Naive thymus-derived CD4-positive, alpha-beta T cell (primary cell): ENCODE measurements at regions of chr18 and their contacts with region 1.

Region 1: DNA sequence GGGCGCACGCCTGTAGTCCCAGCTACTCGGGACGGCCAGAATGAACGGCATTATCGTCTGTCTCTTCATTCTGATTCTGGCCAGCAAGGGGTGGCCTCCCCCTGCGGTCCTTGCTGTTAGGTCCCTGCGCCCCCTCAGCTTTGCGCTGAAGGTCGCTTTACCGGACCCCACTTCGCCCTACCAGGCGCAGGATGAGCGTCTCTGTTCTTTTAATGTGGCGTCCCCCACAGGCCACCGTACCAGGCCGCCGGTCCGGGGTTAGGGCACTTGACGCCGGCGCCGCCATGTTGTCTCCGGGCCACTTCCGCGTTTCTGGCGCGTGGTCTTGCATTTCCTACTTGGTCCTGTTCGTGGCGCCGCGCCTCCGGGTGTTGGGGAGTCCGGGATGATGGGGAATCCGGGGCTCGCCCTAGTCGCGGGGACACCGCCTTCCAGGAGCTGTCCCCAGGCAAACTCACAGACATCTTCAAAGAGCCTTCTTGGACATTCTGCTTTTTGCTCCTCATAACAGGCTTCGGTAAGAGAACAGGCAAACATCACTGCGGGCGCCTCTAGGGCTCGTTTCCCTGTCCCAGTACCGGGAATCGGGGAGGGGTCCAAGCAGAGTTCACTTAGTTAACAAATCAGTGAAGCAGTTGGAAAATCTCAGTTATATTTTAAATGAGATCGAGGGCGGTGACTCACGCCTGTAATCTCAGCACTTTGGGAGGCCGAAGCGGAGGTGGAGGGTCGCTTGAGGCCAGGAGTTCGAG is 8.5 kb upstream of the NARS1 start:
- DNase-seq: peak; percentile 89 to 95 (median 93)
- ATAC-seq: peak; percentile 99
- H3K4me3 ChIP-seq: peak overlapping the region; percentile 88
- H3K4me3 Mint-ChIP-seq: peak overlapping the region; percentile 88 to 98 (median 96)
- H3K27ac ChIP-seq: peak overlapping the region; percentile 79
- H3K27ac Mint-ChIP-seq: peak overlapping the region; percentile 84 to 99 (median 97)
- H3K4me1 ChIP-seq: peaks cover 10 to 11% of the 10 kb centered on the region in 2 donors
- H3K4me1 Mint-ChIP-seq: peaks cover 9 to 23% (median 20%) of the 10 kb centered on the region in 7 donors
- H3K27me3 ChIP-seq: no peaks in the 10 kb centered on the region
- H3K27me3 Mint-ChIP-seq: no peaks in the 10 kb centered on the region

Region 2: GRCh38 chr18:57586251-57587049 is 43.7 kb before region 1 on chr18 and contains the start of gene FECH:
- CTCF ChIA-PET with region 1: no interaction called
- POLR2A ChIA-PET with region 1: interaction called, 3 read pairs
- intact Hi-C with region 1: loop called (anchors 1 kb)
- DNase-seq: peak; percentile 59 to 81 (median 73)
- ATAC-seq: peak; percentile 98
- H3K4me3 ChIP-seq: peak within 1 kb of the TSS; percentile 61
- H3K4me3 Mint-ChIP-seq: peak within 1 kb of the TSS; percentile 81 to 95 (median 89)
- H3K27ac ChIP-seq: peak within 1 kb of the TSS; percentile 75
- H3K27ac Mint-ChIP-seq: peak within 1 kb of the TSS; percentile 65 to 90 (median 83)
- H3K4me1 ChIP-seq: peaks cover 9 to 11% of the 10 kb centered on the region in 2 donors
- H3K4me1 Mint-ChIP-seq: peaks cover 10 to 35% (median 23%) of the 10 kb centered on the region in 7 donors
- H3K27me3 ChIP-seq: no peaks in the 10 kb centered on the region
- H3K27me3 Mint-ChIP-seq: no peaks in the 10 kb centered on the region
- total RNA-seq, gene FECH: 11.7 to 15.3 (median 13.5) TPM

Region 3: GRCh38 chr18:57833443-57834101 is 203.4 kb after region 1 on chr18:
- CTCF ChIA-PET with region 1: interaction called, 5 read pairs
- POLR2A ChIA-PET with region 1: no interaction called
- intact Hi-C with region 1: loop called in 1 of 2 experiments (anchors 1 kb)
- DNase-seq: peak in 2 of 9 donors; percentile 2 to 26
- ATAC-seq: peak; percentile 38
- H3K4me3 ChIP-seq: peak overlapping the region; percentile 38
- H3K4me3 Mint-ChIP-seq: peak overlapping the region; percentile 21 to 83 (median 74)
- H3K27ac ChIP-seq: no peak overlapping the region
- H3K27ac Mint-ChIP-seq: peak overlapping the region in 7 of 9 donors; percentile 19 to 92 (median 60)
- H3K4me1 ChIP-seq: peaks cover 0 to 6% of the 10 kb centered on the region in 2 donors
- H3K4me1 Mint-ChIP-seq: peaks cover 16 to 37% (median 26%) of the 10 kb centered on the region in 7 donors
- H3K27me3 ChIP-seq: no peaks in the 10 kb centered on the region
- H3K27me3 Mint-ChIP-seq: peaks cover 0 to 28% (median 4%) of the 10 kb centered on the region in 5 donors

Region 4: GRCh38 chr18:58117786-58118403 is 487.7 kb after region 1 on chr18:
- CTCF ChIA-PET with region 1: no interaction called
- POLR2A ChIA-PET with region 1: no interaction called
- intact Hi-C with region 1: loop called in 1 of 2 experiments (anchors 1 kb)
- DNase-seq: no peak
- ATAC-seq: peak; percentile 41
- H3K4me3 ChIP-seq: no peak overlapping the region
- H3K4me3 Mint-ChIP-seq: no peak overlapping the region
- H3K27ac ChIP-seq: no peak overlapping the region
- H3K27ac Mint-ChIP-seq: no peak overlapping the region
- H3K4me1 ChIP-seq: no peaks in the 10 kb centered on the region
- H3K4me1 Mint-ChIP-seq: peaks cover 0 to 9% (median 0%) of the 10 kb centered on the region in 7 donors
- H3K27me3 ChIP-seq: no peaks in the 10 kb centered on the region
- H3K27me3 Mint-ChIP-seq: peaks cover 0 to 14% (median 4%) of the 10 kb centered on the region in 5 donors

Region 5: GRCh38 chr18:58180738-58181353 is 550.7 kb after region 1 on chr18:
- CTCF ChIA-PET with region 1: no interaction called
- POLR2A ChIA-PET with region 1: no interaction called
- intact Hi-C with region 1: loop called in 1 of 2 experiments (anchors 1 kb)
- DNase-seq: peak; percentile 25 to 68 (median 50)
- ATAC-seq: peak; percentile 81
- H3K4me3 ChIP-seq: no peak overlapping the region
- H3K4me3 Mint-ChIP-seq: no peak overlapping the region
- H3K27ac ChIP-seq: no peak overlapping the region
- H3K27ac Mint-ChIP-seq: no peak overlapping the region
- H3K4me1 ChIP-seq: no peaks in the 10 kb centered on the region
- H3K4me1 Mint-ChIP-seq: peaks cover 0 to 4% (median 0%) of the 10 kb centered on the region in 7 donors
- H3K27me3 ChIP-seq: peaks cover 0 to 6% of the 10 kb centered on the region in 2 donors
- H3K27me3 Mint-ChIP-seq: peaks cover 0 to 12% (median 4%) of the 10 kb centered on the region in 5 donors